ENCODE measurements at regions of chr16 and their contacts with region 1.

Region 1: DNA sequence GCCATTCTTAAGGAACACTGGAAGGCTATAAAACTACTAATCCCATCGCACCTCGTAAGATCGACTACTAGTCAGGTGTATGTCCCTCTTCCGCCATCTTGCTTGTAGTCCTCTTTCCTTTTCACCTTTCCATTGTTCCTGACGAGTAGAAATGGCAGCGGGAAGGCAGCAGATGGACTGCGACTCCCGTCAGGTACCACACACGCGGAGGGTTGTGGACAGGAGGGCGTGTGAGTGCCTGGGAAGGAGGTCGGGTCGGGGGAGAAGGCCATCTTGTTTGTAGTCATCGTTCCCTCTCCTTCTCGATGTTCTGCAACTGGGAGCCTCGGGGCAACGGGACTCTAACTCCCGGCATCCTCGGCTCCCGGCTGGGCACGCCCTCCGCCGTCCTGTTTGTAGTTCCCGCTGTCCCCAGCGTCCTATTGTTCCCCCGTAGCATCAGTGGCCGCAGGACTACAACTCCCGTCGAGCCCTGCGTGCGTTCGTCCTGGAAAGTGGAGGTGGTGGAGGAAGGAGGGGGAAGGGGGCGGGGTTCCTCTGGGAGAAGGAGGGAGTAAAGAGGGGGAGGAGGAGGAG is 324 bp upstream of the FBXL19 start:
- DNase-seq: peak; percentile 100
- H3K4me3 ChIP-seq: peak overlapping the region; percentile 3 to 87 (median 65)
- H3K27ac ChIP-seq: peak overlapping the region; percentile 66
- H3K4me1 ChIP-seq: peaks cover 2% of the 10 kb centered on the region
- H3K27me3 ChIP-seq: no peaks in the 10 kb centered on the region
- CTCF ChIP-seq: no peak
- POLR2A ChIP-seq: peak; percentile 9

Region 2: GRCh38 chr16:30657866-30658730 is 264.9 kb before region 1 on chr16 and contains the start of gene FBRS:
- CTCF ChIA-PET with region 1: no interaction called
- POLR2A ChIA-PET with region 1: no interaction called
- dilution Hi-C with region 1: no loop called
- intact Hi-C with region 1: loop called (anchors 2 kb)
- DNase-seq: peak; percentile 100
- H3K4me3 ChIP-seq: peak within 1 kb of the TSS; percentile 40 to 90 (median 59)
- H3K27ac ChIP-seq: peak within 1 kb of the TSS; percentile 96
- H3K4me1 ChIP-seq: peaks cover 21% of the 10 kb centered on the region
- H3K27me3 ChIP-seq: no peaks in the 10 kb centered on the region
- CTCF ChIP-seq: peak; percentile 91 to 98
- POLR2A ChIP-seq: peak; percentile 87
- total RNA-seq, gene FBRS: 68.6 and 72.5 TPM in 2 replicates

Region 3: DNA sequence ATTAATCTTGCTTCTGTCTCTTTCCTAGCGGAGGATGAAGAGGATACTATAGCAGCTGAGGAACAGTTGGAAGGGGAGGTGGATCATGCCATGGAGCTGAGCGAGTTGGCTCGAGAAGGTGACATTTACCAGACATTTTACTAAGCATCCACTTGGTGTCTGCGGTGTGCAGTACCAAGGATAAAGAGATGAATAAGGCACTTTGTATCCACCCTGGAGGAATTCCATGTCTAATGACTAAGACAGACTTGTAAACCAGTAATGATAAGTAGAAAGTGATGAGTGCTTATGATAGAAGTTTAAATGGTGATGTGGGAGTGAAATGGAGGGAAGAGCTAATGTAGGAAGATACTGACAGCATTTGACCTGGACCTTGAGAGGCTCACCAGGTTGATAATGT is 212.1 kb before region 1 on chr16:
- CTCF ChIA-PET with region 1: no interaction called
- POLR2A ChIA-PET with region 1: no interaction called
- dilution Hi-C with region 1: no loop called
- intact Hi-C with region 1: no loop called
- DNase-seq: no peak
- H3K4me3 ChIP-seq: no peak overlapping the region
- H3K27ac ChIP-seq: no peak overlapping the region
- H3K4me1 ChIP-seq: peaks cover 5% of the 10 kb centered on the region
- H3K27me3 ChIP-seq: no peaks in the 10 kb centered on the region
- CTCF ChIP-seq: no peak
- POLR2A ChIP-seq: no peak

Region 4: DNA sequence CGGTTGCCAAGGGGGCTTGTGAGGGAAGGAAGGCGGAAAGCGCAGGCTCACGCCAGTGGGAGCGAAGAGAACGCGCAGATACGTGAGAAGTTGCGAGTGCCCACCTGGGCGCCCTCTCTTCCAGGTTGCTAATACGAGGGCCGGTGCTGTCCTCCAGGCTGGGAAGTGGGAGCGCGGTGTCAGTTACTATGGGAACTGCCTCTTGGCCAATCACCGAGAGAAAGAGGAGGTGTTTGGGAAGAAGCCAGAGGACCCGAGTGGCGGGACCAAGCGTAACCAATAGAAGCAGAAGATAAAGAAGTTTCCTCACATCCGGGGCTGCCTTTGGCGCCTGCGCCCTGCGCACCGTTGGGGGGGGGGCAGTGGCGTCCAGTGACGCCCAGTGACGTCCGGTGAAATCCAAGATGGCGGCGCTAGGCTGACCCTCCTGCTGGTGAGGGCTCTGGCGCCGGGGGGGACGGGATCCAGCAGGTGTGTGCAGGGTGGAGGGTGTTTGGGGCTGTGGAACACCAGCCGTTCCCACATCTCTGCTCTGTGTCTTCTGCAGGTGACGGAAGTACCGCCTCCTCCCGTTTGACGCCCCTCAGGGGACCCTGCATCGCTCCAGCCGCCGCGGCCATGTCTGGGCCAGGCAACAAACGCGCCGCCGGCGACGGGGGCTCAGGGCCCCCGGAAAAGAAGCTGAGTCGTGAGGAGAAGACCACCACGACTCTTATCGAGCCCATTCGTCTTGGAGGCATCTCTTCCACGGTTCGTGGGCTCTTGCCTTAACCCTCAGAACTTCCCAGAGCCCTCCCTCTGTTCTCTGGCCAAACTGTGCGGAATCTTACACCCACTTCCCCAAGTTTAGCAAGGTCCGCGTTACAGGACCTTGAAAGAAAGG is 160.9 kb before region 1 on chr16 and contains the starts of genes CFAP119 and RNF40:
- CTCF ChIA-PET with region 1: no interaction called
- POLR2A ChIA-PET with region 1: no interaction called
- dilution Hi-C with region 1: no loop called
- intact Hi-C with region 1: loop called (anchors 5 kb)
- DNase-seq: peak; percentile 99
- H3K4me3 ChIP-seq: peak within 1 kb of the TSS; percentile 19 to 87 (median 75)
- H3K27ac ChIP-seq: peak within 1 kb of the TSS; percentile 47
- H3K4me1 ChIP-seq: peaks cover 15% of the 10 kb centered on the region
- H3K27me3 ChIP-seq: no peaks in the 10 kb centered on the region
- CTCF ChIP-seq: no peak
- POLR2A ChIP-seq: peak; percentile 89
- total RNA-seq, gene CFAP119: 6.5 and 7.2 TPM in 2 replicates
- total RNA-seq, gene RNF40: 97.0 and 102 TPM in 2 replicates

Region 5: GRCh38 chr16:30844671-30845449 is 78.2 kb before region 1 on chr16:
- CTCF ChIA-PET with region 1: interaction called, 38 read pairs
- POLR2A ChIA-PET with region 1: interaction called, 4 read pairs
- dilution Hi-C with region 1: no loop called
- intact Hi-C with region 1: loop called (anchors 1 kb)
- DNase-seq: peak; percentile 81
- H3K4me3 ChIP-seq: no peak overlapping the region
- H3K27ac ChIP-seq: no peak overlapping the region
- H3K4me1 ChIP-seq: no peaks in the 10 kb centered on the region
- H3K27me3 ChIP-seq: no peaks in the 10 kb centered on the region
- CTCF ChIP-seq: peak; percentile 80 to 82
- POLR2A ChIP-seq: no peak

Region 6: GRCh38 chr16:30902029-30902972 is 20.7 kb before region 1 on chr16:
- CTCF ChIA-PET with region 1: interaction called, 9 read pairs
- POLR2A ChIA-PET with region 1: no interaction called
- dilution Hi-C with region 1: no loop called
- intact Hi-C with region 1: loop called (anchors 1 kb)
- DNase-seq: peak; percentile 67
- H3K4me3 ChIP-seq: peak overlapping the region; percentile 12 to 34 (median 31)
- H3K27ac ChIP-seq: peak overlapping the region; percentile 83
- H3K4me1 ChIP-seq: peaks cover 24% of the 10 kb centered on the region
- H3K27me3 ChIP-seq: no peaks in the 10 kb centered on the region
- CTCF ChIP-seq: peak; percentile 16 to 34
- POLR2A ChIP-seq: peak; percentile 90

Region 7: GRCh38 chr16:31073968-31074813 is 151.1 kb after region 1 on chr16 and contains the starts of genes ZNF646 and ZNF668:
- CTCF ChIA-PET with region 1: no interaction called
- POLR2A ChIA-PET with region 1: no interaction called
- dilution Hi-C with region 1: no loop called
- intact Hi-C with region 1: loop called (anchors 1 kb)
- DNase-seq: peak; percentile 99
- H3K4me3 ChIP-seq: peak within 1 kb of the TSS; percentile 68 to 87 (median 87)
- H3K27ac ChIP-seq: peak within 1 kb of the TSS; percentile 86
- H3K4me1 ChIP-seq: peaks cover 14% of the 10 kb centered on the region
- H3K27me3 ChIP-seq: no peaks in the 10 kb centered on the region
- CTCF ChIP-seq: no peak
- POLR2A ChIP-seq: peak; percentile 84
- total RNA-seq, gene ZNF646: 13.1 and 15.9 TPM in 2 replicates
- total RNA-seq, gene ZNF668: 11.6 and 13.3 TPM in 2 replicates

Measured in endothelial cell of umbilical vein (primary cell).